IMR-90 (cell line): ENCODE measurements at regions of chr22 and their contacts with region 1.

Region 1: DNA sequence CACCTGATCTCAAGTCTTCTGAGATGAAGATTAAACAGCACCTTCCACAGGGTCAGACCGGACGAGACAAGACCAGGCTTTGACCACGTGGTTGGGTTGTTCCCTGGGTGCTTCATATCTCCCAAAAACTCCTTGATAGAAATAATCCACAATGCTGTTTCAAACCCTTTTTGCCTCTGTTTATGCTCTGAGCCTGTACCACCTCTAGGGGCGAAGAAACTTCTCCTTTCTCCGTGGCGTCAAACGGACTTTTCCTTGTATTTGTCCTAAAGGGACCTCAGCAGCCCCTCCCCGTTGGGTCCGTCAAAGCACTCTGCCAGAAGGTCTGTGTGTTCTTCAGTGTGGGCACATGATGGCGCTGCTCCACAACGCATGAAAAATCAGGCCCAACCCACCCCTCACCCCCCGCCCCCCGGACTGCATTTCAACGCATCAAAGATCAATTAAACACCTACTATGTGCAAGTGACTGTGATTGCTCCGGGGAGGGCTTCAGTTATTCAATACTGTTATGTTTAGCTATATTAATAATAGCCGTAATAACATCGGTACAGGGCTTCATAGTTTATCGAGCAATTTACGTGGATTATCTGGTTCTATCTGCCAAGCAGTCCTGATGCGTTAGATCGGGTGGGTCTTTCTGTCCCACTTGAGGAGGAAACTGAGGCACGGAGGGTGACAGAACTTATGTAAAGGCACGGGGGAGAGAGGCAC is 17.3 kb upstream of the EIF3D start:
- DNase-seq: peak; percentile 62
- ATAC-seq: peak; percentile 70
- H3K4me3 ChIP-seq: no peak overlapping the region
- H3K27ac ChIP-seq: no peak overlapping the region
- H3K4me1 ChIP-seq: peaks cover 13% of the 10 kb centered on the region; the same call in 1 of the 2 replicates
- H3K27me3 ChIP-seq: peaks cover 9% of the 10 kb centered on the region
- CTCF ChIP-seq: peak; percentile 62
- POLR2A ChIP-seq: no peak
- RAD21 ChIP-seq: peak; percentile 71

Region 2: DNA sequence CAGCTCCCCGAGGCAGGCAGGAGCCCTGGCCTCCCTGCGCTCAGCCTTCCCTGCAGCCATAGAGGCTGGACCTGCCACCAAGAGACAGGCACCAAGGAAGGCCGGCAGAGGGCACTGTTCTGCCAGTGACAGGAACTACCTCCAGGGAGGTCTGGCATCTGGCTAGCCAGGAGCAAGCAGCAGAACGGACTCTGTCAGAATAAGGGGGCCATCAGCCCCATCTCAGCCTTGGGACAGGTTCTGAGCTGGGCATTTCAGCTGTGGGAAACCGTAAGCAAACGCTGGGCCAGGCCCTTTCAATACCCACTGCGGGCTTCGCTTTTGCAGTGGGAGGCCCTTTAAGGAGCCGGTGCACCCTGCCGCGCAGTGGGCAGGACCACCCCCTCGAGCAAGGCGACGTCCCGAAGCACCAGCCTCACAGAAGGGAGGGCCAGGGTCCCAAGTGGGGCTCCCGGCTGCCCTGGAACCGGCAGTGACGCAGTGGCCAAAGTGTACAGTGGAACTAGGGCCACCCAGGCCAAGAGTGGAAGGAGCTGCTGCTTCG is 211.5 kb after region 1 on chr22:
- CTCF ChIA-PET with region 1: interaction called, 4 read pairs
- POLR2A ChIA-PET with region 1: no interaction called
- dilution Hi-C with region 1: no loop called
- in situ Hi-C with region 1: no loop called
- intact Hi-C with region 1: loop called (anchors 5 kb)
- DNase-seq: peak; percentile 70
- ATAC-seq: peak; percentile 93
- H3K4me3 ChIP-seq: no peak overlapping the region
- H3K27ac ChIP-seq: no peak overlapping the region
- H3K4me1 ChIP-seq: peaks cover 3% of the 10 kb centered on the region; the same call in 1 of the 2 replicates
- H3K27me3 ChIP-seq: peaks cover 23% of the 10 kb centered on the region
- CTCF ChIP-seq: peak; percentile 76
- POLR2A ChIP-seq: no peak
- RAD21 ChIP-seq: peak; percentile 63

Region 3: GRCh38 chr22:36775964-36776669 is 229.9 kb after region 1 on chr22 and contains the start of gene IFT27:
- CTCF ChIA-PET with region 1: interaction called, 10 read pairs
- POLR2A ChIA-PET with region 1: no interaction called
- dilution Hi-C with region 1: no loop called
- in situ Hi-C with region 1: loop called (anchors 10 kb)
- intact Hi-C with region 1: loop called (anchors 1 kb)
- DNase-seq: peak; percentile 100
- ATAC-seq: peak; percentile 96
- H3K4me3 ChIP-seq: peak within 1 kb of the TSS; percentile 56
- H3K27ac ChIP-seq: peak within 1 kb of the TSS; percentile 31
- H3K4me1 ChIP-seq: peaks cover 4% of the 10 kb centered on the region
- H3K27me3 ChIP-seq: no peaks in the 10 kb centered on the region
- CTCF ChIP-seq: no peak
- POLR2A ChIP-seq: peak; percentile 46; the same call in 1 of the 2 replicates
- RAD21 ChIP-seq: no peak
- total RNA-seq, gene IFT27: 14.5 and 18.3 TPM in 2 replicates

Region 4: GRCh38 chr22:36856121-36856791 is 310.0 kb after region 1 on chr22:
- CTCF ChIA-PET with region 1: interaction called, 11 read pairs
- POLR2A ChIA-PET with region 1: interaction called, 3 read pairs
- dilution Hi-C with region 1: no loop called
- in situ Hi-C with region 1: loop called (anchors 5 kb)
- intact Hi-C with region 1: loop called (anchors 1 kb)
- DNase-seq: peak; percentile 79
- ATAC-seq: peak; percentile 98
- H3K4me3 ChIP-seq: no peak overlapping the region
- H3K27ac ChIP-seq: no peak overlapping the region
- H3K4me1 ChIP-seq: no peaks in the 10 kb centered on the region
- H3K27me3 ChIP-seq: peaks cover 26% of the 10 kb centered on the region
- CTCF ChIP-seq: peak; percentile 100; the same call in 1 of the 2 replicates
- POLR2A ChIP-seq: no peak
- RAD21 ChIP-seq: peak; percentile 80

Region 5: DNA sequence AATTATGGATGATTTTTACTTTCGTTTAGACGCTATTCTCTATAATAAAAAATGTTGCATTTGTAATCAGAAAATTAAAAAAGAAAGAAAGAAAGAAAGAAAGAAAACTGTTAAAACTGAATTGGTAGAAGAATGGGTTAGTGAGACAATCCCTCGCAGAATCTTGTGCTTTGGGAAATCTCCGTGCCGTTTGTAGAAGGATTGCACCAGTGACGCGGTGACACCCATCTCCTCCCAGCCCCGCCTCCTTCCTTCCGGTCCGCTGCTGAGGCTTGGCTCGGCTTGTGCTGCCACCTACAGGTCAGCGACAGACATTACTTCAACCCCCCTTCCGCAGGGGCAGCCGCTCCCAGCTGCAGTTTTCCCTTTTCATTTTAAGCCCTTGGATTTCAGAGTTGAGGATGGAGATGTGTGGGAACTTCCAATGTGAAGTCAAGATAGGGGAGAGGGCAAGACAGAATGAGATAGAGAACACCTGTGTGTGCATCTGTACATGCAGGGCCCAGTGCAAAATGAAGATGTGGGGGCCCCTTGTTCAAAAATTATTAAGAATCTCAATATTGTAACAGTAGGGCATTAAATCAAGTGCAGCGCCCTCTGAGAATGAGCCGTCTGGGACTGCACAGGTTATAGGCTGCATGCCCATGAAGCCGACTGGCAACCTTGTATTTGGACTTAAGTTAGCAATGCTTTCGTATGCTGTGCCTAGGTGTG is 431.9 kb after region 1 on chr22:
- CTCF ChIA-PET with region 1: interaction called, 4 read pairs
- POLR2A ChIA-PET with region 1: no interaction called
- dilution Hi-C with region 1: no loop called
- in situ Hi-C with region 1: no loop called
- intact Hi-C with region 1: loop called (anchors 1 kb)
- DNase-seq: peak; percentile 76
- ATAC-seq: peak; percentile 99
- H3K4me3 ChIP-seq: peak overlapping the region; percentile 36
- H3K27ac ChIP-seq: no peak overlapping the region
- H3K4me1 ChIP-seq: no peaks in the 10 kb centered on the region
- H3K27me3 ChIP-seq: peaks cover 22% of the 10 kb centered on the region
- CTCF ChIP-seq: peak; percentile 97
- POLR2A ChIP-seq: no peak
- RAD21 ChIP-seq: peak; percentile 90